Thyroid gland (tissue), 4 donors: ENCODE measurements at regions of chr9 and their contacts with region 1.

Region 1: DNA sequence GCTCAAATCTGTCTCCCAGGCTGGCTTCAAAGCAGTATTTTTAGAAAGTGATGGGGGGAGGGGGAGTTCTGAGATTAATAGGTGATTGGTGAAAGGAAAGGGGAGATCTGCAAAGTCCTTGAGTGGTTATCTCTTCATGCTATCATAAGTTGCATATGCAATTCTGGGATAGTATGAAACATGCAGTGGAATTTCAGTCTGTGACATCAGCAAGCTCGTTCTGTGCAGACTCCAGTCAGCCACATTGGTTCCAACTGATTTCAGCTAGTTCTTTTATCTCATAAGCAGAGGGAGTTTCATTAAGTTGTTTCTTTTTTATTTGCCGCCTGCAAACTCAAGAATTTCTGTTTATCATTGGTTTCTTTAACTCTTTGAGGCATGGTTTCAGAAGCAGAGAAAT is 180.5 kb upstream of the SH3GL2 start:
- DNase-seq: no peak
- H3K4me3 ChIP-seq: no peak overlapping the region
- H3K27ac ChIP-seq: no peak overlapping the region
- H3K4me1 ChIP-seq: no peaks in the 10 kb centered on the region
- H3K27me3 ChIP-seq: no peaks in the 10 kb centered on the region
- CTCF ChIP-seq: no peak
- POLR2A ChIP-seq: no peak

Region 2: DNA sequence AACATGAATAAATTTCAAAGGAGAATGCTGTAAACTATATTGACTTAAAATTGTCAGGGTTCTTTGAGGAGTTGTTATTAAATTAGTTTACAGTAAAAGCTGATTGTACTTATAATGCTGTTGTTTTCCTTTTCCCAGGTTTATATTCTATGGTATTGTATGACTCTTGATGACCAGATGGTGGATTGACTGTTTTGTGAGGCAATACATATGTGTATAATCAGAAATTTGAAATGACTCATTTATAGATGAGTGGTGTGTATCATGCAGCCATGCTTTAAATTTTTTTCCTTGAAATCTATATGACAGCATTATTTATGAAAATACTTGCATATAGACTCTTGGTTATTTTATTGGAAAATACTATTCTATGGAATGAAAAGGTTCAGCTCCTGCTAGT is 68.3 kb before region 1 on chr9:
- intact Hi-C with region 1: loop called (anchors 10 kb)
- DNase-seq: no peak
- H3K4me3 ChIP-seq: no peak overlapping the region
- H3K27ac ChIP-seq: no peak overlapping the region
- H3K4me1 ChIP-seq: no peaks in the 10 kb centered on the region
- H3K27me3 ChIP-seq: no peaks in the 10 kb centered on the region
- CTCF ChIP-seq: no peak
- POLR2A ChIP-seq: no peak